ENCODE measurements at regions of chr10 and their contacts with region 1.

Region 1: GRCh38 chr10:100433253-100434240 is 29.3 kb upstream of the WNT8B start:
- DNase-seq: peak; percentile 100
- ATAC-seq: peak; percentile 99
- H3K4me3 Mint-ChIP-seq: no peak overlapping the region
- H3K27ac Mint-ChIP-seq: no peak overlapping the region
- H3K4me1 Mint-ChIP-seq: peaks cover 4% of the 10 kb centered on the region
- H3K27me3 Mint-ChIP-seq: no peaks in the 10 kb centered on the region
- CTCF ChIP-seq: peak; percentile 96

Region 2: GRCh38 chr10:100338434-100339036 is 95.0 kb before region 1 on chr10:
- CTCF ChIA-PET with region 1: interaction called, 292 read pairs
- POLR2A ChIA-PET with region 1: interaction called, 5 read pairs
- intact Hi-C with region 1: loop called (anchors 1 kb)
- DNase-seq: peak; percentile 90
- ATAC-seq: peak; percentile 92
- H3K4me3 Mint-ChIP-seq: no peak overlapping the region
- H3K27ac Mint-ChIP-seq: peak overlapping the region; percentile 44
- H3K4me1 Mint-ChIP-seq: peaks cover 2% of the 10 kb centered on the region
- H3K27me3 Mint-ChIP-seq: peaks cover 1% of the 10 kb centered on the region
- CTCF ChIP-seq: peak; percentile 91

Region 3: GRCh38 chr10:100373298-100374136 is 60.0 kb before region 1 on chr10:
- CTCF ChIA-PET with region 1: interaction called, 11 read pairs
- POLR2A ChIA-PET with region 1: no interaction called
- intact Hi-C with region 1: no loop called
- DNase-seq: peak; percentile 100
- ATAC-seq: peak; percentile 83
- H3K4me3 Mint-ChIP-seq: no peak overlapping the region
- H3K27ac Mint-ChIP-seq: no peak overlapping the region
- H3K4me1 Mint-ChIP-seq: peaks cover 39% of the 10 kb centered on the region
- H3K27me3 Mint-ChIP-seq: no peaks in the 10 kb centered on the region
- CTCF ChIP-seq: no peak

Region 4: DNA sequence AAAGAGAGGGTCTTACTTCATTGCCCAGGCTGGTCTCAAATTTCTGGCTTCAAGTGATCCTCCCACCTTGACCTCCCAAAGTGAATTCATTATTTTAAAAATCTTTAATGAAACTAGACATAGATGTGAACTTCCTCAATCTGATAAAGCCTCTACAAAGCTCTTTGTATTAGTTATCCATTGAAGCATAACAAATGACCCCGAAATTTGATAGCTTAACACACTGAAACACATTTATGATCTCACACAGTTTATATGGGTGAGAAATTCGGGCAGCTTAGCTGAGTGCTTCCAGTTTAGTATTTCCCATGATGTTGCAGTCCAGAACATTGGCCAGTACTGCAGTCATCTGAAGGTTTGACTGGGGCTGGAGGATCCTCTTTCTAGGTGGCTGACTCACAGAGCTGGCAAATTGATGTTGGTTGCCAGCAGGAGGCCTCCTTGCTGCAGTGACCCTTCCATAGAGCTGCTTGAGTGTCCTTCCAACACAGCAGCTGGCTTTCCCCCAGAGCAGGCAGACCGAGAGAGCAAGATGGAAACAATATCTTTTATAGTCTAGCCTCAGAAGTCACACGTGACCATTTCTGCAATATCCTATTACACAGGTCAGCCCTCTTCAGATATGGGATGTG is 12.7 kb after region 1 on chr10:
- CTCF ChIA-PET with region 1: interaction called, 17 read pairs
- POLR2A ChIA-PET with region 1: no interaction called
- intact Hi-C with region 1: no loop called
- DNase-seq: no peak
- ATAC-seq: no peak
- H3K4me3 Mint-ChIP-seq: no peak overlapping the region
- H3K27ac Mint-ChIP-seq: no peak overlapping the region
- H3K4me1 Mint-ChIP-seq: no peaks in the 10 kb centered on the region
- H3K27me3 Mint-ChIP-seq: no peaks in the 10 kb centered on the region
- CTCF ChIP-seq: no peak

Region 5: GRCh38 chr10:100481462-100482081 is 48.0 kb after region 1 on chr10:
- CTCF ChIA-PET with region 1: interaction called, 25 read pairs
- POLR2A ChIA-PET with region 1: no interaction called
- intact Hi-C with region 1: no loop called
- DNase-seq: peak; percentile 96
- ATAC-seq: peak; percentile 98
- H3K4me3 Mint-ChIP-seq: peak overlapping the region; percentile 77
- H3K27ac Mint-ChIP-seq: no peak overlapping the region
- H3K4me1 Mint-ChIP-seq: peaks cover 10% of the 10 kb centered on the region
- H3K27me3 Mint-ChIP-seq: peaks cover 18% of the 10 kb centered on the region
- CTCF ChIP-seq: no peak

Region 6: GRCh38 chr10:100508691-100509150 is 75.2 kb after region 1 on chr10:
- CTCF ChIA-PET with region 1: interaction called, 153 read pairs
- POLR2A ChIA-PET with region 1: interaction called, 4 read pairs
- intact Hi-C with region 1: loop called (anchors 1 kb)
- DNase-seq: peak; percentile 65
- ATAC-seq: peak; percentile 48
- H3K4me3 Mint-ChIP-seq: peak overlapping the region; percentile 59
- H3K27ac Mint-ChIP-seq: peak overlapping the region; percentile 95
- H3K4me1 Mint-ChIP-seq: peaks cover 72% of the 10 kb centered on the region
- H3K27me3 Mint-ChIP-seq: no peaks in the 10 kb centered on the region
- CTCF ChIP-seq: peak; percentile 91

Region 7: GRCh38 chr10:100529475-100530298 is 96.1 kb after region 1 on chr10 and contains the start of gene NDUFB8:
- CTCF ChIA-PET with region 1: interaction called, 34 read pairs
- POLR2A ChIA-PET with region 1: no interaction called
- intact Hi-C with region 1: no loop called
- DNase-seq: peak; percentile 92
- ATAC-seq: peak; percentile 72
- H3K4me3 Mint-ChIP-seq: peak within 1 kb of the TSS; percentile 85
- H3K27ac Mint-ChIP-seq: peak within 1 kb of the TSS; percentile 95
- H3K4me1 Mint-ChIP-seq: peaks cover 32% of the 10 kb centered on the region
- H3K27me3 Mint-ChIP-seq: no peaks in the 10 kb centered on the region
- CTCF ChIP-seq: no peak
- total RNA-seq, gene NDUFB8: 365 to 384 TPM

Region 8: GRCh38 chr10:100551196-100551595 is 117.6 kb after region 1 on chr10:
- CTCF ChIA-PET with region 1: no interaction called
- POLR2A ChIA-PET with region 1: no interaction called
- intact Hi-C with region 1: no loop called
- DNase-seq: no peak
- ATAC-seq: no peak
- H3K4me3 Mint-ChIP-seq: no peak overlapping the region
- H3K27ac Mint-ChIP-seq: no peak overlapping the region
- H3K4me1 Mint-ChIP-seq: no peaks in the 10 kb centered on the region
- H3K27me3 Mint-ChIP-seq: no peaks in the 10 kb centered on the region
- CTCF ChIP-seq: no peak

Measured in activated CD8-positive, alpha-beta T cell treated with anti-CD3 and anti-CD28 coated beads for 36 hours (primary cell).